CD14-positive monocyte (primary cell): ENCODE measurements at regions of chr18 and their contacts with region 1.

Region 1: DNA sequence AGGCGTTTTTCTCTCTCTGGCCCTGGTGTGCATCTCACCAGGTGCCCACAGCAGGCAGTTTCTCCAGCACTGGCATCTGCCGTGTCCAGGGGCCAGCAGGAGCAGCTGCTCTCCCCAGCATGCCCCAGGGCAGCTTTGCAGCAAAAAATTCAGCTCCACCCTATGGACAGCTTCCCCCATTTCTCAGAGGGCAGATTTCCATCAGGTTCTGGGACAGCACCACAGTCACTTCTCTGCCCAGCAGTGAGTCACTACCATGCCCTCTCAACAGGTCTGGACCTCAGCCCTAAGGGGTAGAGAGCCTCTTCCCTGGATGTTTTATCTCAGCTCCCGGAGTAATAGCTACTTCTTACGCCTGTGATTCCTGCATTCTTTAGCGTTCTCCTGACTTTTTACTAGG is 170.2 kb upstream of the RAB12 start:
- DNase-seq: no peak
- H3K4me3 ChIP-seq: no peak overlapping the region
- H3K4me3 Mint-ChIP-seq: no peak overlapping the region
- H3K27ac ChIP-seq: no peak overlapping the region
- H3K27ac Mint-ChIP-seq: no peak overlapping the region
- H3K4me1 ChIP-seq: no peaks in the 10 kb centered on the region
- H3K4me1 Mint-ChIP-seq: no peaks in the 10 kb centered on the region
- H3K27me3 ChIP-seq: no peaks in the 10 kb centered on the region
- H3K27me3 Mint-ChIP-seq: peaks cover 0 to 1% (median 0%) of the 10 kb centered on the region in 3 donors
- CTCF ChIP-seq: no peak

Region 2: DNA sequence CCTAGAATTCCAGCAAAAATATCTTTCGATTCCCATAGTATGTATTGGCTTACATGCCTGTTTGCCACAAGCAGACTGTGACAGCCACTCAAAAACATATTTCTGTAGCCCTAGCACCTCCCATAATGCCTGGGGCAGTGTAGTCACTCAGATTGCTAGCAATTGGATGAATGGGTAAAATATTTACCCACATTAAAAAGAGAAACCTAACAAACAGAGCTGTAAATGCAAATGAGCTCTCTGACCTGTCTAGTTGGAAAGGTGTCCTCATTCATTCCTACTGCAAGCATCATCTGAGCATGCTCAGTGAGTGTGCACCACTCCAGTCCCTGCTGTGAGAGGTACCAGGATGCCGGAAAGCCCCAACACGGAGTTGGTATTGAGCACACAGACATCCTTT is 63.8 kb before region 1 on chr18:
- intact Hi-C with region 1: loop called in 1 of 2 experiments (anchors 10 kb)
- DNase-seq: no peak
- H3K4me3 ChIP-seq: no peak overlapping the region
- H3K4me3 Mint-ChIP-seq: no peak overlapping the region
- H3K27ac ChIP-seq: no peak overlapping the region
- H3K27ac Mint-ChIP-seq: no peak overlapping the region
- H3K4me1 ChIP-seq: peaks cover 0 to 7% of the 10 kb centered on the region in 2 donors
- H3K4me1 Mint-ChIP-seq: peaks cover 5% of the 10 kb centered on the region
- H3K27me3 ChIP-seq: no peaks in the 10 kb centered on the region
- H3K27me3 Mint-ChIP-seq: peaks cover 0 to 2% (median 0%) of the 10 kb centered on the region in 3 donors
- CTCF ChIP-seq: no peak

Region 3: DNA sequence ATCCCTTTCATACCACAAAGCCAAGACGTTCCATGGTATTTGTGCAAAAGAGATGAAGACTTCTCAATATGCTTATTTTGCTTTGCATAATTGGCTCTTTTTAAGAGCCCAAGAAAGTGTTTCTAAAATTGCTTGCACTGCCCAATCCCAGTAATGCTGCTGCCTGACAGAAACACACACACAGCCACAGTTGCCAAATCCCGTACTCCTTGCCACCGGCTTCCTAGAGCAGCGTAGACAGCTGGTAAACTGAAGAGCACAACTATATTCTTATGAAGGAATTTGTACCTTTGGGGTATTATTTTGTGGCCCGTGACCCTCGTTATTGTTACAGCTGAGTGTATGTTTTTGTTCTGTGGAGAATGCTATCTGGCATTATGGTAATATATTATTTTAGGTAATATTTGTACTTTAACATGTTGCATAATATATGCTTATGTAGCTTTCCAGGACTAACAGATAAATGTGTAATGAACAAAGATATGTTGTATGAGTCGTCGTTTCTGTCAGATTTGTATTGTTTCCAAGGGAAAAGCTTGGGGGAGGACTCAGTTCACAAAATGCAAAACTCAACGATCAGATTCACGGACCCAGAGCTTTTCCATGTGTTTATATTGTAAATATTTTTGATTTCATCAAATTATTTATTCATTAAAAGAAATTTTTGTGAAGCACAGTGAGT is 32.7 kb before region 1 on chr18:
- intact Hi-C with region 1: no loop called
- DNase-seq: no peak
- H3K4me3 ChIP-seq: no peak overlapping the region
- H3K4me3 Mint-ChIP-seq: no peak overlapping the region
- H3K27ac ChIP-seq: no peak overlapping the region
- H3K27ac Mint-ChIP-seq: no peak overlapping the region
- H3K4me1 ChIP-seq: no peaks in the 10 kb centered on the region
- H3K4me1 Mint-ChIP-seq: no peaks in the 10 kb centered on the region
- H3K27me3 ChIP-seq: no peaks in the 10 kb centered on the region
- H3K27me3 Mint-ChIP-seq: peaks cover 0 to 2% (median 2%) of the 10 kb centered on the region in 3 donors
- CTCF ChIP-seq: no peak